Ovary (tissue), 10 donors: ENCODE measurements at regions of chr11 and their contacts with region 1.

Region 1: DNA sequence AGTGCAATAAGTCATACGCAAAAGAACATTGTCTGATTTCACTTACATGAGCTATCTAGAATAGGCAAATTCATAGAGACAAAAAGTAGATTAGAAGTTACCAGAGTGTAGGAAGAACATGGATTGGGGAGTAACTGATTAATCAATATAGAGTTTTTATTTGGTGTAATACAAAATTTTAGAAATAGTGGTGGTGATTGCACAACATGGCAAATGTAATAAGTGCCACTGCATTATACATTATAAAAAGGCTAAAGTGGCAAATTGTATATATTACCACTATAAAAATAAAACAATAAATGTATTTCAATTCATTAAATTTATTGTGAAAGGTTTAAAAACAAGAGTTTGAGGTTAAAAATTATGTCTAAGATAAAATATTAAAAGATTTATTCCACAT is 8.7 kb upstream of the OR51B4 start:
- DNase-seq: no peak
- H3K4me3 ChIP-seq: no peak overlapping the region
- H3K27ac ChIP-seq: no peak overlapping the region
- H3K4me1 ChIP-seq: no peaks in the 10 kb centered on the region
- H3K27me3 ChIP-seq: no peaks in the 10 kb centered on the region
- CTCF ChIP-seq: no peak
- EP300 ChIP-seq: no peak
- POLR2A ChIP-seq: no peak

Region 2: GRCh38 chr11:5151713-5152153 is 158.7 kb before region 1 on chr11:
- intact Hi-C with region 1: no loop called
- DNase-seq: no peak
- H3K4me3 ChIP-seq: no peak overlapping the region
- H3K27ac ChIP-seq: no peak overlapping the region
- H3K4me1 ChIP-seq: no peaks in the 10 kb centered on the region
- H3K27me3 ChIP-seq: no peaks in the 10 kb centered on the region
- CTCF ChIP-seq: no peak
- EP300 ChIP-seq: no peak
- POLR2A ChIP-seq: no peak

Region 3: DNA sequence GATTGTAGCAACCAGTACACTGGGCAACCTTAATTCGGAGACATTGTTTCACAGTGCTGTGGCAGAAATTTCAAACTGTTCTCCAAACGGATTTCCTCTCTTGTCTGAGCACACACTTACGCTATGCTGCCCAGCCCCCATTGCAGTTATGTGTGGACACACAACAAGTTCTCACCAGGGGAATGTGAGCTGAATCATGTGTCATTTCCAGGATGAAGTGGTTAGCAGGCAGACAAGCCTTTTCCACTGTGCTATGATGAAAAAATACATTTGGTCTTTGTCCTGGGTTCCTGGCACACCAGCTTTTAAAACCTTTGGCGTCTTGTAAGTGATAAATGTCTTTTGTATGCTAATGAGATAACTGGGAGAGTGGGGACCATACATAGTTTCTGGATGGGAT is 1894.4 kb after region 1 on chr11:
- intact Hi-C with region 1: loop called in 1 of 4 experiments (anchors 5 kb)
- DNase-seq: no peak
- H3K4me3 ChIP-seq: no peak overlapping the region
- H3K27ac ChIP-seq: no peak overlapping the region
- H3K4me1 ChIP-seq: no peaks in the 10 kb centered on the region
- H3K27me3 ChIP-seq: no peaks in the 10 kb centered on the region
- CTCF ChIP-seq: no peak
- EP300 ChIP-seq: no peak
- POLR2A ChIP-seq: no peak